ENCODE measurements at regions of chr3 and their contacts with region 1.

Region 1: GRCh38 chr3:57227204-57227929 is at the start of gene APPL1:
- DNase-seq: peak; percentile 93 to 96
- ATAC-seq: peak; percentile 98 to 99 (median 99)
- H3K4me3 ChIP-seq: peak within 1 kb of the TSS; percentile 65 to 97 (median 82)
- H3K27ac ChIP-seq: peak within 1 kb of the TSS; percentile 90 to 97 (median 95)
- H3K4me1 ChIP-seq: peaks cover 0 to 37% (median 30%) of the 10 kb centered on the region in 9 donors
- H3K27me3 ChIP-seq: no peaks in the 10 kb centered on the region
- CTCF ChIP-seq: peak in 2 of 9 donors; percentile 6 to 11
- total RNA-seq, gene APPL1: 44.7 to 58.7 (median 51.0) TPM

Region 2: DNA sequence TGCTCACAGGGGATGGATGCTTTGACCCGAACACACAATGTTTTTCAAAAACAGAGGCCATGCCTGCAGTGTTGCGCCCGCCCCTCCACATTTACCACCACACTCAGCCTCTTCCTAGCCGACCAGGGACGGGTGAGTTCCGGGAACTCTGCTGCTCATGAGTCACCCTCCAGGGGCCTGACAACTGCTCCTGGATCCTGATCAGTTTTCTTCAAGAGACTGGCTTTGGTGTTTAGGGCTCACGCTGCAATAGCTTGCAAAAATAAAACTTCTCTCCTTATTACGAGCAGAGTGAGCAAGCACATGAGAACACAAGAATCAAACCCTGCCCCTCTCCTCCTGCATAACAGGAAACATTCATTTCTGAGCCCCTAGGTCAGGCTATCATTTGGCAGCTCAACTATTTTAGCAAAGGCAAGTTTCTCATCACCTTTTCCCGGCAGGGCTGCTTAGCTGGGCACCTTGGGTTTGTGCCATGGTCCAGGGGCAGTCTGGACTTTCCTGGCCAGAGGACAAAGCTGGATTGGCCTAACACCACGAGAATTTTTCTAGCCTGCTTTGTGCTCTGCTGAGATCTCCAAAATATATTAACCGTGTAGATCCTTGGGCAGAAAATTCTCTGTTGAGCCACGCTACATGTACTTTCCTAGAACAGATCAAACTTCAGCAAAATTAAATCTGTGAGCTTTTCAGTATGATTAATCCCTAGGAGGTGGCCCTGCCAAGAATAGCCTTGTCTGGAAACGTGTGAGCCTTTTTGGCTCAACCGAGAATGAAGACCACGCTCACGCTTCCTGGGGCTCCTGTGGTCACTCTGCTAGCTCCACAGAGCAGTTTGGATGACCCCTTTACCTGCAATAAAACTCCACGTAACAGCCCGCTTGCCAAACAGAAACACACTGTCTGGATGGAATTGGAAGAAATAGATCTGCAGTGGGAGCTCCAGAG is 219.6 kb before region 1 on chr3:
- intact Hi-C with region 1: loop called in 2 of 10 experiments (anchors 10 kb)
- DNase-seq: peak; percentile 43 to 51
- ATAC-seq: peak; percentile 65 to 92 (median 86)
- H3K4me3 ChIP-seq: peak overlapping the region in 1 of 10 donors; percentile 14
- H3K27ac ChIP-seq: peak overlapping the region in 8 of 10 donors; percentile 35 to 82 (median 68)
- H3K4me1 ChIP-seq: peaks cover 4 to 31% (median 25%) of the 10 kb centered on the region in 9 donors
- H3K27me3 ChIP-seq: no peaks in the 10 kb centered on the region
- CTCF ChIP-seq: no peak

Region 3: GRCh38 chr3:57094575-57094974 is 132.8 kb before region 1 on chr3:
- intact Hi-C with region 1: loop called in 3 of 10 experiments (anchors 5 to 10 kb)
- DNase-seq: no peak
- ATAC-seq: peak in 1 of 8 donors; percentile 33
- H3K4me3 ChIP-seq: peak overlapping the region in 1 of 10 donors; percentile 11
- H3K27ac ChIP-seq: peak overlapping the region in 6 of 10 donors; percentile 5 to 59 (median 24)
- H3K4me1 ChIP-seq: peaks cover 0 to 14% (median 0%) of the 10 kb centered on the region in 9 donors
- H3K27me3 ChIP-seq: no peaks in the 10 kb centered on the region
- CTCF ChIP-seq: no peak

Region 4: GRCh38 chr3:57100046-57100695 is 127.2 kb before region 1 on chr3:
- intact Hi-C with region 1: loop called in 9 of 10 experiments (anchors 2 to 10 kb)
- DNase-seq: peak in 1 of 2 donors; percentile 72
- ATAC-seq: peak in 7 of 8 donors; percentile 60 to 86 (median 76)
- H3K4me3 ChIP-seq: no peak overlapping the region
- H3K27ac ChIP-seq: no peak overlapping the region
- H3K4me1 ChIP-seq: peaks cover 0 to 8% (median 0%) of the 10 kb centered on the region in 9 donors
- H3K27me3 ChIP-seq: no peaks in the 10 kb centered on the region
- CTCF ChIP-seq: peak; percentile 81 to 95 (median 91)

Region 5: DNA sequence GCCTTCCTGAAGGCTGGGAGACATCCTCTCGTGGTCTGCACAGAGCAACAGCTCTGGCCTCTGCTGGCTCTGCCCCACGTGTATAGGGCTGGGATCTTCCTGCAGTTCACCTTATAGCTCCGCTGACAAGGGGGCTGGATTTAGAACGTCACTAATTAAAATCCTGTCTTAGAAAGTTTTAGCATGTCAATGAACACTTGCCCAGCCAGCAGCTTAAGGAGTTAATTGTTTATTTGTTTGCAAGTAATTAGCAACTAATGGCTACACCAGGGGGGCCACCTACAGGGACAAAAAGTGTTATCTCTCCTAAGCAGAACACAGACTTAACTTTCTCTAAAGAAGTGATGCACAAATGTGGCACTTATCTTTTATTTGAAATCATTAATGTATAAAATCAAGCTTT is 27.5 kb before region 1 on chr3 and contains the start of gene HESX1:
- intact Hi-C with region 1: no loop called
- DNase-seq: no peak
- ATAC-seq: no peak
- H3K4me3 ChIP-seq: no peak within 1 kb of the TSS
- H3K27ac ChIP-seq: no peak within 1 kb of the TSS
- H3K4me1 ChIP-seq: no peaks in the 10 kb centered on the region
- H3K27me3 ChIP-seq: peaks cover 0 to 19% (median 0%) of the 10 kb centered on the region in 7 donors
- CTCF ChIP-seq: no peak
- total RNA-seq, gene HESX1: 0.22 to 1.2 (median 0.54) TPM in 6 of 10 donors, not detected in the others

Measured in heart right ventricle (tissue), 16 donors.